ENCODE measurements at regions of chr17 and their contacts with region 1.

Region 1: GRCh38 chr17:42067351-42068091 is 17.1 kb upstream of the C17orf113 start:
- DNase-seq: no peak
- ATAC-seq: peak; percentile 70
- H3K4me3 ChIP-seq: no peak overlapping the region
- H3K27ac ChIP-seq: no peak overlapping the region
- H3K4me1 ChIP-seq: peaks cover 11% of the 10 kb centered on the region
- H3K27me3 ChIP-seq: peaks cover 3 to 7% of the 10 kb centered on the region in 2 experiments
- CTCF ChIP-seq: peak; percentile 89 to 95 (median 91)
- EP300 ChIP-seq: no peak
- POLR2A ChIP-seq: no peak
- RAD21 ChIP-seq: peak; percentile 56

Region 2: DNA sequence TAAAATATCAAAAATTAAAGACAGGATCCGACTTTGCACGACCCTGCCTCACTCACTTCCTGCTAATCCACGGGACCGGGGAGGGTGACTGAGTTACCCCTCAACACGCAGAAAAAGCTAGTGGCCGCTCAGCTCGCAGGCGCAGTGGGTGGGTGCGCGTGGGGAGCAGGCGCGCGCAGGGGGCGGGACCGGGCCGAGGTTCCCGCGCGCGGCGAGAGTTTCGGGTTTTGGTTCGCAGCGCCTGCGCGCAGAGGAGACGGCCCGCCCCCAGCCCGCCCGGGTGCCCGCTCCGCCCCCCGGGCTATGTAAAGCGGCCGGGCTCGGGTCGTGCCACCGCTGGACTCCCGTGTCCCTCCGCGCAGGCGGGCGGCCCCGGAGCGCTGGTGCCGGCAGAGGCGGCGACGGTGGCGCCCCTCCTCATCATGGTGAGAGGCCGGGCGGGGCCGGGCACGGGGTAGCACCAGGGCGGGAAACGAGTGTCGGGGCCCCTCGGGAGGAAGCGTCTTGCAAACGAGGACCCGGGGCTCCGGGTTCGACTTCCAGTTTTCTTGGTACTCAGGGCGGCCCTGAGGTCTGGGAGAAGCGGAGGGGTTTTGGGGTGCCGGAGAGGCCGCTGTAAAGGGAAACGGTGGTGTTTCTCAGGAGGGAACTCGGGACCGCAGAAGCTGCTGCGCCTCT is 100.9 kb before region 1 on chr17 and contains the start of gene CNP:
- CTCF ChIA-PET with region 1: interaction called, 16 read pairs
- POLR2A ChIA-PET with region 1: no interaction called
- RAD21 ChIA-PET with region 1: interaction called, 3 read pairs
- SMC1A ChIA-PET with region 1: interaction called, 12 read pairs
- in situ Hi-C with region 1: no loop called
- intact Hi-C with region 1: no loop called
- DNase-seq: peak; percentile 49
- ATAC-seq: peak; percentile 91
- H3K4me3 ChIP-seq: peak within 1 kb of the TSS; percentile 79
- H3K27ac ChIP-seq: peak within 1 kb of the TSS; percentile 87
- H3K4me1 ChIP-seq: peaks cover 6% of the 10 kb centered on the region
- H3K27me3 ChIP-seq: no peaks in the 10 kb centered on the region
- CTCF ChIP-seq: no peak
- EP300 ChIP-seq: no peak
- POLR2A ChIP-seq: peak; percentile 92
- RAD21 ChIP-seq: no peak
- polyA plus RNA-seq, gene CNP: 1.8 to 4.4 TPM

Region 3: GRCh38 chr17:42027961-42028790 is 39.3 kb before region 1 on chr17:
- CTCF ChIA-PET with region 1: interaction called, 11 read pairs
- POLR2A ChIA-PET with region 1: interaction called, 4 read pairs
- RAD21 ChIA-PET with region 1: interaction called, 5 read pairs
- SMC1A ChIA-PET with region 1: interaction called, 5 read pairs
- in situ Hi-C with region 1: no loop called
- intact Hi-C with region 1: loop called (anchors 5 kb)
- DNase-seq: no peak
- ATAC-seq: no peak
- H3K4me3 ChIP-seq: no peak overlapping the region
- H3K27ac ChIP-seq: no peak overlapping the region
- H3K4me1 ChIP-seq: peaks cover 13% of the 10 kb centered on the region
- H3K27me3 ChIP-seq: no peaks in the 10 kb centered on the region
- CTCF ChIP-seq: peak in 2 of 3 experiments; percentile 23 to 24; a peak in 1 of 6 replicates
- EP300 ChIP-seq: no peak
- POLR2A ChIP-seq: no peak
- RAD21 ChIP-seq: no peak

Region 4: GRCh38 chr17:42077755-42078154 is 10.2 kb after region 1 on chr17:
- CTCF ChIA-PET with region 1: interaction called, 10 read pairs
- POLR2A ChIA-PET with region 1: no interaction called
- RAD21 ChIA-PET with region 1: no interaction called
- SMC1A ChIA-PET with region 1: no interaction called
- in situ Hi-C with region 1: no loop called
- intact Hi-C with region 1: no loop called
- DNase-seq: no peak
- ATAC-seq: no peak
- H3K4me3 ChIP-seq: no peak overlapping the region
- H3K27ac ChIP-seq: no peak overlapping the region
- H3K4me1 ChIP-seq: no peaks in the 10 kb centered on the region
- H3K27me3 ChIP-seq: peaks cover 4 to 5% of the 10 kb centered on the region in 2 experiments; a peak in 3 of 4 replicates
- CTCF ChIP-seq: no peak
- EP300 ChIP-seq: no peak
- POLR2A ChIP-seq: no peak
- RAD21 ChIP-seq: no peak

Region 5: GRCh38 chr17:42101513-42102319 is 34.2 kb after region 1 on chr17:
- CTCF ChIA-PET with region 1: interaction called, 29 read pairs
- POLR2A ChIA-PET with region 1: no interaction called
- RAD21 ChIA-PET with region 1: interaction called, 4 read pairs
- SMC1A ChIA-PET with region 1: interaction called, 3 read pairs
- in situ Hi-C with region 1: no loop called
- intact Hi-C with region 1: loop called (anchors 5 kb)
- DNase-seq: no peak
- ATAC-seq: peak; percentile 87
- H3K4me3 ChIP-seq: no peak overlapping the region
- H3K27ac ChIP-seq: no peak overlapping the region
- H3K4me1 ChIP-seq: peaks cover 5% of the 10 kb centered on the region
- H3K27me3 ChIP-seq: peaks cover 1 to 6% of the 10 kb centered on the region in 2 experiments; a peak in 1 of 4 replicates
- CTCF ChIP-seq: peak; percentile 84 to 92 (median 92)
- EP300 ChIP-seq: no peak
- POLR2A ChIP-seq: peak; percentile 36; the same call in 1 of the 2 replicates
- RAD21 ChIP-seq: peak; percentile 81

Region 6: DNA sequence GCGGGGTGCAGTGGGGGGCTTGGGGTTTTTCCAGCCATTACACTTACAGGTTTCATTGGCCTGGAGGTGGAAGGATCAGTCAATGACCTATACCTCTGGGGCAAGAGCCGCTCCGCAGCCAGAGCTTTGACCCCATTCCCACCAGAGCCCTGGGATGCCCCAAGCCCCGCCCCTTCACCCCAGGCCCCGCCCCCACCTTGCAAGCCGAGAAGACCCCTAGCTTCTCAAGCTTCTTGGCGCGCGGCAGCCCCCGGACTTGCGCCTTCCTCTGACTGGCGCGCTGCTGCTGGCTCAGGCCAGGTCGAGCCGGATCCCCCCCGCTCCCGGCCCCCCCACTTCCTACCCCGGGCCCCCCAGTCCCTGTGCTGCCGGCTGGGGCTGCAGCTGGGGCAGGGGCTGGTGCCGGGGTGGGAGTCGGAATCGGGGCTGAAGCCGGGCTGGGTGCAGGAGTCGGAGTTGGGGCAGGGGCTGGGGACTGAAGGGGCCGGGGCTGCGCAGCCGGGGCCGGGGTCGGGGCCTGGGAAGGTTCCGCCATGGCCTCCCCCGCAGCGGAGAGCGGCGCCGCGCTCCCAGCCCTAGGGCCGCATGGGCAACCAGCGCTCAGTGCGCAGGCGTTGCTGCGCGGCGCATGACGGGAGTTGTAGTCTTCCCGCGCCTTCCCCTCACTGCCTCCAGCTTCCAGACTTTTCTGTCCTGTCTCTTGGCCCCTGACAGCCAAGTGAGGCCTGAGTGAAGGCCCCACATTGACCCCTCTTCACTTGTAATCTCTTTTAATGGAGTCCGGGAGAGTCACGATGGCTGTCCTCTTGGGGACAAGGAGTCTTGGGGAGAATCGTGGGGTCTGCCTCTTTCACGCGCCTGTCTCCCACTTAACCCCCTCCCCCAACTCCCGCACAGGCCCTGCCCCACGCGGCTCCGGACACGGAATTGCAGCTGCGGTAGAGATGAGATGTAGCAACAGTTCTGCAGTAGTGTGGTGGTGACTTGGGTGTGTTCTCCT is 53.5 kb after region 1 on chr17 and contains the start of gene KAT2A:
- CTCF ChIA-PET with region 1: interaction called, 100 read pairs
- POLR2A ChIA-PET with region 1: interaction called, 5 read pairs
- RAD21 ChIA-PET with region 1: interaction called, 8 read pairs
- SMC1A ChIA-PET with region 1: interaction called, 13 read pairs
- in situ Hi-C with region 1: no loop called
- intact Hi-C with region 1: loop called (anchors 1 kb)
- DNase-seq: no peak
- ATAC-seq: peak; percentile 94
- H3K4me3 ChIP-seq: peak within 1 kb of the TSS; percentile 82
- H3K27ac ChIP-seq: no peak within 1 kb of the TSS
- H3K4me1 ChIP-seq: peaks cover 5% of the 10 kb centered on the region
- H3K27me3 ChIP-seq: no peaks in the 10 kb centered on the region
- CTCF ChIP-seq: no peak
- EP300 ChIP-seq: no peak
- POLR2A ChIP-seq: peak; percentile 91
- RAD21 ChIP-seq: no peak
- polyA plus RNA-seq, gene KAT2A: 0.85 to 3.0 TPM